HAP-1 (cell line): ENCODE measurements at regions of chr17 and their contacts with region 1.

Region 1: GRCh38 chr17:80981062-80981902 is 10.4 kb upstream of the CHMP6 start:
- DNase-seq: peak in 1 of 2 experiments; percentile 72
- H3K4me3 ChIP-seq: peak overlapping the region; percentile 30
- H3K4me1 ChIP-seq: no peaks in the 10 kb centered on the region
- H3K27me3 ChIP-seq: no peaks in the 10 kb centered on the region; the same call in 1 of the 2 replicates

Region 2: GRCh38 chr17:80426681-80427326 is 554.5 kb before region 1 on chr17:
- in situ Hi-C with region 1: loop called (anchors 5 kb)
- DNase-seq: peak; percentile 47 to 89
- H3K4me3 ChIP-seq: no peak overlapping the region
- H3K4me1 ChIP-seq: no peaks in the 10 kb centered on the region
- H3K27me3 ChIP-seq: no peaks in the 10 kb centered on the region

Region 3: DNA sequence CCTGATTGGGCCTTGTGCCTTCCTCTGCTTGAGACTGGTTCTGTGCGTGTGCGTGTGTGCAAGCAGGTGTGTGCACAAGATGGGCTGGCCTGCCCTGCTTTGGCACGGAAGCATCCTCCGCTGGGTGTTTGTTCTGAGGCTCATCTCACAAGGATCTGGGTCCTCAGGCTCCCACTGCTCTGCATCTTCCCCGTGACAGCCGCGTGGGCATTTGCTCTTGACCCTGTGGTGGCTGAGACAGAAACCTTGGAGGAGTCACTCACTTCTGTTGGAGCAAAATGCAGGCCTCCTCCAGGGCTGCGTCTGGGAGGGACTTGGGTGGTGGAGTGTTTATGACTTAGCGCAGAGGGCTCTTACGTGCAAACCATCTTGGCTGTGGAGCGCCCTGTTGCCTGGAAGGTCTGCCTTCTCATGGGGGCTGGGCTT is 317.5 kb before region 1 on chr17:
- in situ Hi-C with region 1: no loop called
- DNase-seq: no peak
- H3K4me3 ChIP-seq: no peak overlapping the region
- H3K4me1 ChIP-seq: peaks cover 3% of the 10 kb centered on the region
- H3K27me3 ChIP-seq: no peaks in the 10 kb centered on the region

Region 4: DNA sequence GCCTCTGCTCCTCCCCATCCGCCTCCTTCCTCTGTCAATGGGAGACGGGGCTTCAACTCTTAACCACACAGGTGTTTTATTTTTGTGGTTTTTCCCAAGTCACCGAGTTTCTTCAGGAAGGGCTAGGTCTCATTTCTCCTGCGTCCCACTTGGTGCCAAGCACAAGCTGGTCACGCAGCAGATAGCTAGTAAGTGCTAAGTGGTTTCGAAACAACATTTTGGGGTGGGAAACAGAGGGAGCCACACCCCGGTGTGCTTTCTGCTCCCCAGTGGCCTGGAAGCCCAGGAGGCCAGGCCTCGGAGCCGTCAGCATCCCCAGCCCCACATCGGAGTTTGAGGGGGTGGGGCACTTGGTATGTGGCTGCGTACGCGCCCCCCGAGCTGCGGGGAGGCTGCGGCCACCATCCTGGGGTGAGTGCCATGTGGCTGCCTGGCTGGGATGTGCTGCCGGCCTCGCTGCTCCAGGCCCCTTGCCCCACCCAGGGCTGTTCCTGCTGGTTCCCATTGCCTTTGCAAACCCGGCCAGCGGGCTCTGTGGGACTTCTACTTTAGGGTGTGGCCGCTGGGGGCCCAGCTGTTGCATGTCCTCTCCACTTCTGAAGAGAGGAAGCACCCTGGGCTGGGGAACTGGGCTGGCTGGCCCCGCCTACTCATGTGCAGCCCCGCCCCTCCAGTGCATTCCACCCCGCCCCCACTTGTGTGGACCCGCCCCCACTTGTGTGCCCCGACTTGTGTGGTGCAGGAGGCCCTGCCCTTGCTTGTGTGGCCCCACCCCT is 109.3 kb after region 1 on chr17:
- in situ Hi-C with region 1: no loop called
- DNase-seq: peak in 1 of 2 experiments; percentile 69
- H3K4me3 ChIP-seq: no peak overlapping the region
- H3K4me1 ChIP-seq: peaks cover 19% of the 10 kb centered on the region
- H3K27me3 ChIP-seq: no peaks in the 10 kb centered on the region

Region 5: DNA sequence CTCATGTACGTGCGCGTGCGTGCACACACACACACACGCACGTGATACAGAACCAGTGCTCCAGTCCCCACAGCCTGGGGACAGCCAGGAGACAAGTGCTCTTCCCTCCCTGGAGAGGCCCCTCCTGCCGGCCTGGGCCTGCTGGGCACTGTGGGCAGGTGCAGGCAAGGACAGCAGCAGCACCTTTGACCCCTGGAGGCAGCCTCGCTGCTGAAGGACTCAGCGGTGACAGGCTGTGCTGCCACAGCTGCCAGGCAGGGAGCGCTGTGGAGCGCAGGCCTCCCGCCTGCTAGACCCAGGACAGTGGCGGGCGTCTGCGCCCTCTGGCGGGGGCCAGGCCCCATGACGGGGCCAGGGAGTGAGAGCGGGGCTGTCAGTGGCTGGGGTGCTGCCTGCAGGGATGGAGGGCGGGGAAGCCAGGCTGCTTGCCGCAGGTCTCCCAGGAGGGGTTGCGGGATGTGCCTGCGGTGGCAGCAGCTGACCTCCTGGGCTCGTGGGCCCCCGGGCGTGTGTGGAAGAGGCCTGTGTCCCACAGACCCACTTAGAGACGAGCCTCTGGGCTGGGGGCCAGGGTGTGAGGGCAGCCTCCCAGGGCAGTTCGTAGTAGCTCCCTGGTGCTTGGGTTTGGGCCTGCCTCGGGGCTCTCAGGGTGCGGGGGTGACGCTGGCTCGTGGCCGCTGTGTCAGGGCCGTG is 120.5 kb after region 1 on chr17:
- in situ Hi-C with region 1: no loop called
- DNase-seq: peak; percentile 75 to 91
- H3K4me3 ChIP-seq: no peak overlapping the region
- H3K4me1 ChIP-seq: peaks cover 10% of the 10 kb centered on the region
- H3K27me3 ChIP-seq: no peaks in the 10 kb centered on the region